HCT116 (cell line): ENCODE measurements at regions of chr15 and their contacts with region 1.

Region 1: GRCh38 chr15:98647774-98648653 is at the start of gene IGF1R:
- DNase-seq: peak; percentile 73
- ATAC-seq: peak; percentile 72
- H3K4me3 ChIP-seq: peak within 1 kb of the TSS; percentile 46 to 65
- H3K27ac ChIP-seq: peak within 1 kb of the TSS; percentile 51; the same call in 1 of the 2 replicates
- H3K4me1 ChIP-seq: peaks cover 3 to 17% of the 10 kb centered on the region in 2 experiments; a peak in 3 of 4 replicates
- H3K27me3 ChIP-seq: peaks cover 57% of the 10 kb centered on the region
- CTCF ChIP-seq: peak in 1 of 3 experiments; percentile 4; a peak in 1 of 6 replicates
- POLR2A ChIP-seq: no peak
- RAD21 ChIP-seq: no peak
- total RNA-seq, gene IGF1R: 16.3 TPM

Region 2: DNA sequence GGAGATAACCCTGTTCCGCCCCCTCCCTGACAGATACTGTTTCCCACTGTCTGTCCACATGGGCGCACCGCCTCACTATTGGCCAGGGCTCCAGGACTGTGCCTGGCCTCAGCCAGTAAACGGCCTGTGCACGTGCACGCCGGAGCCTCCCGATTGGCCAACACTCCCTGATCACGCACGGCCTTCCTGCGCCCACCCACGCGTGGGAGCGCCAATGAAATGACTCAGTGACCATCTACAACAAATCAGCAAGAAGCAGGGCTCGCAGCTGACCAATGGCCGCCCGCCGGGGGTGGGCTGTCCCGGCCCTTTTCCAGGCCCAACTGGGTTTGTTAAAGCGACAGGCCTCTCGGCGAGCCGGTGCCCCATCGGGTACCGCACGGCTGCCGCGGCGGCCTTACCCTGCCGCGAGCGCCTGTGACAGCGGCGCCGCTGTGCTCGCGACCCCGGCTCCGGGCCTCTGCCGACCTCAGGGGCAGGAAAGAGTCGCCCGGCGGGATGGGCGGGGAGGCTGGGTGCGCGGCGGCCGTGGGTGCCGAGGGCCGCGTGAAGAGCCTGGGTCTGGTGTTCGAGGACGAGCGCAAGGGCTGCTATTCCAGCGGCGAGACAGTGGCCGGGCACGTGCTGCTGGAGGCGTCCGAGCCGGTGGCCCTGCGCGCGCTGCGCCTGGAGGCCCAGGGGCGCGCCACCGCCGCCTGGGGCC is 687.5 kb before region 1 on chr15 and contains the start of gene ARRDC4:
- CTCF ChIA-PET with region 1: no interaction called
- POLR2A ChIA-PET with region 1: no interaction called
- RAD21 ChIA-PET with region 1: no interaction called
- intact Hi-C with region 1: loop called (anchors 5 kb)
- DNase-seq: peak; percentile 99
- ATAC-seq: peak; percentile 95
- H3K4me3 ChIP-seq: peak within 1 kb of the TSS; percentile 67 to 71
- H3K27ac ChIP-seq: peak within 1 kb of the TSS; percentile 64; the same call in 1 of the 2 replicates
- H3K4me1 ChIP-seq: peaks cover 5 to 17% of the 10 kb centered on the region in 2 experiments
- H3K27me3 ChIP-seq: no peaks in the 10 kb centered on the region
- CTCF ChIP-seq: no peak
- POLR2A ChIP-seq: no peak
- RAD21 ChIP-seq: no peak
- total RNA-seq, gene ARRDC4: 19.6 TPM

Region 3: DNA sequence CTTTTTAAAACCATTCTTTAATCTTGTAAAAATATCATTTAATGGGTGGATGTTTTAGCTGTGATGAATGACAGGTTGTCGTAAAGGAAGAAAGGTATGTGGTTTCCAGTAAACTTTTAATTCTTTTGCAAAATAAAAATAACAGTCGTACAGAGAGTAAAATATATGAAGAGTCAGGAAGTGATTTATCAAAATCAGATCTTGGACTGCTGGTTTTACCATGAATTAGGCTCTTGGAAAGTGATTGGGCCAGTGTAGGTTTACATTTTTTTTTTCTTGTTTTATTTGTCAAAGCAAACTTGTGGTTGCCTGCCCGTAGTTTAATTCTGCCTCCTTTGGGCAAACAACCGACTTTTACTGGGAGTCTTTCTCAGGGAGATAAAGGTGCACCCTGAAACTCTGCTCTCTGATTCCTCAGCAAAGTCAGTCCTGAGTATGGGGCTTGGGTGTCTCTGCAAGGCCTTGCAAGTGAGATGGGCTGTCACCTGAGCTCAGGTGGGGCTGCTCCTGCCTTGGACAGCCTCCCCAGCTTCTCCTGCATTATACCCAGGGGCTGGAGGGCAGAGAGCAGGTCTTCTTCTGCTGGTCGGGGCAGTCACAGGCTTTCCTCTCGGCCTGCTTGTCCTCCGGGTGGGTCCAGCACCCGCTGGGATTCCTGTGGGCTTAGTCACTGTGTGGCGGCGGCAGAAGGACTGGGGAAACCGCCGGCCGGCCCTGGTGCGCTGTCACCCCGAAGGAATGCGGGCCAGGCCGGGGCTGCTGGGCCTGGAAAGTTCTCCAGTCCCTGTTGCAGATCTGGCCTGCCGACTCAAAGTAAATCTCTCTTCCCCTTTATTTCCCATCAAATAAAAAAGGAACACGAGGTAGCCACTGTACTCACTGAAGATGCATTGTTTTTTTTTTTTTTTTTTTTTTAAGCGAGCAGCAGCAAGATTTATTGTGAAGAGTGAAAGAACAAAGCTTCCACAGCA is 79.4 kb after region 1 on chr15:
- CTCF ChIA-PET with region 1: no interaction called
- POLR2A ChIA-PET with region 1: no interaction called
- RAD21 ChIA-PET with region 1: no interaction called
- intact Hi-C with region 1: loop called (anchors 5 kb)
- DNase-seq: peak; percentile 84
- ATAC-seq: peak; percentile 98
- H3K4me3 ChIP-seq: peak overlapping the region; percentile 23 to 48
- H3K27ac ChIP-seq: peak overlapping the region; percentile 98
- H3K4me1 ChIP-seq: peaks cover 36 to 45% of the 10 kb centered on the region in 2 experiments
- H3K27me3 ChIP-seq: no peaks in the 10 kb centered on the region
- CTCF ChIP-seq: no peak
- POLR2A ChIP-seq: no peak
- RAD21 ChIP-seq: no peak; the same call in 1 of the 2 replicates

Region 4: GRCh38 chr15:98850961-98851573 is 203.1 kb after region 1 on chr15:
- CTCF ChIA-PET with region 1: interaction called, 7 read pairs
- POLR2A ChIA-PET with region 1: no interaction called
- RAD21 ChIA-PET with region 1: interaction called, 3 read pairs
- intact Hi-C with region 1: loop called (anchors 1 kb)
- DNase-seq: peak; percentile 35
- ATAC-seq: peak; percentile 72
- H3K4me3 ChIP-seq: peak overlapping the region in 1 of 2 experiments; percentile 68; a peak in 1 of 4 replicates
- H3K27ac ChIP-seq: no peak overlapping the region
- H3K4me1 ChIP-seq: peaks cover 19 to 32% of the 10 kb centered on the region in 2 experiments
- H3K27me3 ChIP-seq: no peaks in the 10 kb centered on the region
- CTCF ChIP-seq: peak; percentile 78 to 81 (median 79)
- POLR2A ChIP-seq: no peak
- RAD21 ChIP-seq: peak; percentile 93

Region 5: DNA sequence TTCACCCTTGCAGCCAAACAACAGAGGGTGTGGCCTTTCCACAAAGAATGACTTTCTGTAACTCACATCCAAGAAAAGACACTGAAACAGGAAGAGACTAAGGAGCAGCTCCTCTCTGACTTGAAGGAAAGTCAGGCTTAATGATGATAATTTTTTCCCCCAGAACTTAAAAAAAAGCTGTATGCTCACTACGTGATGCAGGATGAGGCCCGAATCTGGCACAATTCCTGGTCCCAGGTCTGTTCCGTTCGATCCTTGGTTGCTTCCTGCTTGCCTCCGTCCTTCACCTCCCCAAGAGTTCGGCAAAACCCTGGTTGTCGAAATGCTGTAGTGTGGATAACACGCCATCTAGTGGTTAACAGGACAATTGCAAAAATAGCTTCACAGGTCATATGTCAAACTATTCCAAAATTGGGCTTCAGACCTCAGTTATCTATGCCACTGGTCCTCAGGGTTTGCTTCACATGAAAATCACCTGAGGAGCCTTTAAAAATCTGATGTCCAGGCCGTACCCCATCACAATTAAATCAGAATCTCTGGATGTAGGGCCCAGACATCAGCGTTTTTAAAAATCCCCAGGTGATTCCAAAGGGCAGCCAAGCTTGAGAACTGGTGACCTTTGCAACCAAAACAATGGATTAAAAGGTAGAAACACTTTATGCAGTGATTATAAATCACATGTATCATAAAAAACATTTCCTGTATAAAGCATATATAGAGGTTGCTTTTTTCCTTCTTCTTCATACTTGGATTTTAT is 428.7 kb after region 1 on chr15:
- CTCF ChIA-PET with region 1: no interaction called
- POLR2A ChIA-PET with region 1: no interaction called
- RAD21 ChIA-PET with region 1: no interaction called
- intact Hi-C with region 1: loop called (anchors 5 kb)
- DNase-seq: peak; percentile 68
- ATAC-seq: peak; percentile 96
- H3K4me3 ChIP-seq: peak overlapping the region; percentile 14 to 48; a peak in 3 of 4 replicates
- H3K27ac ChIP-seq: no peak overlapping the region
- H3K4me1 ChIP-seq: peaks cover 0 to 2% of the 10 kb centered on the region in 2 experiments; a peak in 2 of 4 replicates
- H3K27me3 ChIP-seq: no peaks in the 10 kb centered on the region
- CTCF ChIP-seq: peak; percentile 80 to 88 (median 83)
- POLR2A ChIP-seq: no peak
- RAD21 ChIP-seq: peak; percentile 96